ENCODE measurements at regions of chr22 and their contacts with region 1.

Region 1: GRCh38 chr22:43826142-43827002 is 14.3 kb upstream of the EFCAB6 start:
- DNase-seq: peak; percentile 62
- ATAC-seq: peak; percentile 77
- H3K4me3 ChIP-seq: peak overlapping the region; percentile 22; the same call in 1 of the 2 replicates
- H3K27ac ChIP-seq: no peak overlapping the region
- H3K4me1 ChIP-seq: peaks cover 17% of the 10 kb centered on the region
- H3K27me3 ChIP-seq: no peaks in the 10 kb centered on the region
- CTCF ChIP-seq: peak; percentile 73

Region 2: GRCh38 chr22:43385770-43386641 is 440.4 kb before region 1 on chr22:
- CTCF ChIA-PET with region 1: interaction called, 3 read pairs
- POLR2A ChIA-PET with region 1: no interaction called
- intact Hi-C with region 1: loop called (anchors 5 kb)
- DNase-seq: peak; percentile 64
- ATAC-seq: peak; percentile 95
- H3K4me3 ChIP-seq: no peak overlapping the region
- H3K27ac ChIP-seq: no peak overlapping the region
- H3K4me1 ChIP-seq: no peaks in the 10 kb centered on the region
- H3K27me3 ChIP-seq: peaks cover 15% of the 10 kb centered on the region; the same call in 1 of the 2 replicates
- CTCF ChIP-seq: peak; percentile 76

Region 3: DNA sequence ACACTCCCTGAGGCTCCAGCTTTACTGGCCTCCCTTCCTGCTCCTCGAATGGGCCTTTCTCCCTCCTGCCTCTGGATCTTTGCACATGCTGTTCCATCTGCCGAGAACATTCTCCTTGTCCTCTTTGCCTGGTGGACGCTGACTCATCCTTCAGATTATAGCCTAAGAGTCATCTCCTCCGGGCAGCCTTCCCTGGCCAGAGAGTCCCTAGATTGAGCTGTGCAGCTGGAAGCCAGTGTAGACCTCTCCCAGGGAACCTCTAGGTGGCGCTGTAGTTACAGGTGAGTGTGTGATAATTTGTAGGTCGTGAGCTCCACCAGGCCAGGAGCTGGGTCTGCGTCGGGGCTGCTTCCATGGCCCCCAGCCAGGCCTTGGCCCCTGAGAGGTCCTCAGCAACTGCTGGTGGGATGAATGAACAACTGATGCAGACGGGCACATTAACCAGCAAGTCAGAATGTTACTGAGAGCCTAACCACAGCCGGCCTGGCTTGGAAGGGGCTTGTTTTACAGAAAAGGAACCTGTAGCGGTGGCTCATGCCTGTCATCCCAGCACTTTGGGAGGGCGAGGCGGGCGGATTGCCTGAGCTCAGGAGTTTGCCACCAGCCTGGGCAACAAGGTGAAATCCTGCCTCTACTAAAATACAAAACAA is 56.8 kb after region 1 on chr22:
- CTCF ChIA-PET with region 1: interaction called, 10 read pairs
- POLR2A ChIA-PET with region 1: no interaction called
- intact Hi-C with region 1: no loop called
- DNase-seq: peak; percentile 80
- ATAC-seq: peak; percentile 94
- H3K4me3 ChIP-seq: no peak overlapping the region
- H3K27ac ChIP-seq: no peak overlapping the region
- H3K4me1 ChIP-seq: no peaks in the 10 kb centered on the region
- H3K27me3 ChIP-seq: no peaks in the 10 kb centered on the region
- CTCF ChIP-seq: peak; percentile 73

Measured in PC-3 (cell line).